ENCODE measurements at regions of chr1 and their contacts with region 1.

Region 1: DNA sequence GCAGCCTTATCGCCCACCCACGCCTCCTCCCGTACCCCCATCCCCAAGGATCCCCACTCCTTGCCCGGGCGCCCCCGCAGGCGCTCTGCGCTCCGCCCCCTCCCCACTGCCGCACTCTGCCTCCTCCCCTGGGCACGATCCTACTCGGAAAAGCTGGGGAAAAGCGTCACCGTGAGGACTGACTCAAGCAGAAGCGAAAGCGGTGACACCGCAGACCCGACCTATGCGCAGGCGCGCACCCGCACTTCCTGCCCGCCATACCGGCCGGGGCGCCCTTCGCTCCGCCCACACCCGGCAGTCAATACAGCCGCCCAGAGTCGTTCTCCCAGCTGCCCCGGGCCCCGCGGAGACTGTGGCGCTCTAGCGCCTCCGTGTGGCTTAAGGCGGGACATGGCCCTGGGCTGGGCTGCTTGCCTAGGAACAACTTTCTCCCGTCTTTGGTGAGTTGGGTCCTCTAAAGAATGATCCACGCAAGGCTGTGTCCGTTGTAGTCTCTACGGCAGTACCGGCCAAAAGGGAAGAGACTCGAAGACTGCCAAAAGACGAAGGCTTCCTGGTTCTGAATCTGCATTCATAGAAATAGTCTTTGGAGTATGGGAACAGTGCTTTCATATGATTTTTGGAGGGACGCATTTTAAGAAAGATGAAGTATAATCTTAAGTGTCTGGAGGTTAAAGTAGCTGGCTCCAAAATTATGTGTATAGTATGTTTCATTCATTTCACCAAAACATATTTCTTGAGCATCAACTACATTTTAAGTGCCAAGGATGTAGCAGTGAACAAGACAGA is at the start of gene OMA1:
- DNase-seq: peak; percentile 94 to 99
- H3K4me3 ChIP-seq: peak within 1 kb of the TSS; percentile 83 to 87
- H3K27ac ChIP-seq: peak within 1 kb of the TSS; percentile 99 to 100
- H3K4me1 ChIP-seq: peaks cover 0 to 5% of the 10 kb centered on the region in 2 donors
- H3K27me3 ChIP-seq: no peaks in the 10 kb centered on the region
- CTCF ChIP-seq: peak; percentile 96 to 99 (median 97)
- total RNA-seq, gene OMA1: 2.4 TPM

Region 2: DNA sequence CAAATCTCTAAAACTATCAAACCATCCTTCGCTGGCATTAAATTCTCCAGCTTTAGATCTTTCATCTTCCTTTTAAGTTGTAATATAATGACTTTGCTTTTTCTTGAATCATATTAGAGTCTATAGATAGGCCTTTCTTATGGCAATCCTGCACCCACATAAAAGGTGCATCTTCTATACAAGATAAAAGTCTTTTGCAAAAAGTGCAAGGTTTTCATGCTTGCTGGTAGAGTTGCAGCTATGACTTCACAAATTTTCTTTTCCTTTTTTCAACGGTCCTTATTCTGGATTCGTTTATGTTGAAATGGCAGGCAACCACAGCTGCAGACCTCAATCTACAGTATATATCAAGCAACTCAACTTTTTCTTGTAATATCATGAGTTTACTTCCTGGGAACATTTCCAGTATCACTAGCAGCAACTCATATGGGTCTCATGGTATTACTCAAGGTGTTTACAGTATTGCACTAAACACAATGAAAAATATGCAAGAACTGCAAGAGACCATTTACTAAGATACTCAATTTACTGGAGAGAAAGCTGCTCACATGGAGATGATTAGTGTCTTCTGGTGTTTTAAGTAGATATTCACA is 22.3 kb before region 1 on chr1:
- intact Hi-C with region 1: no loop called
- DNase-seq: no peak
- H3K4me3 ChIP-seq: no peak overlapping the region
- H3K27ac ChIP-seq: no peak overlapping the region
- H3K4me1 ChIP-seq: no peaks in the 10 kb centered on the region
- H3K27me3 ChIP-seq: no peaks in the 10 kb centered on the region
- CTCF ChIP-seq: no peak

Region 3: GRCh38 chr1:58576727-58577653 is 30.3 kb after region 1 on chr1 and contains the start of gene TACSTD2:
- intact Hi-C with region 1: loop called (anchors 2 kb)
- DNase-seq: peak in 1 of 2 donors; percentile 74
- H3K4me3 ChIP-seq: peak within 1 kb of the TSS; percentile 59 to 71
- H3K27ac ChIP-seq: peak within 1 kb of the TSS in 1 of 2 donors; percentile 58
- H3K4me1 ChIP-seq: peaks cover 8 to 9% of the 10 kb centered on the region in 2 donors
- H3K27me3 ChIP-seq: no peaks in the 10 kb centered on the region
- CTCF ChIP-seq: no peak
- total RNA-seq, gene TACSTD2: 1.3 TPM

Region 4: GRCh38 chr1:58592529-58593134 is 45.9 kb after region 1 on chr1:
- intact Hi-C with region 1: loop called (anchors 1 kb)
- DNase-seq: peak; percentile 49 to 95
- H3K4me3 ChIP-seq: no peak overlapping the region
- H3K27ac ChIP-seq: peak overlapping the region; percentile 79 to 88
- H3K4me1 ChIP-seq: peaks cover 6 to 35% of the 10 kb centered on the region in 2 donors
- H3K27me3 ChIP-seq: no peaks in the 10 kb centered on the region
- CTCF ChIP-seq: no peak

Region 5: GRCh38 chr1:58652651-58653184 is 106.0 kb after region 1 on chr1:
- intact Hi-C with region 1: loop called (anchors 1 kb)
- DNase-seq: peak in 1 of 2 donors; percentile 70
- H3K4me3 ChIP-seq: no peak overlapping the region
- H3K27ac ChIP-seq: no peak overlapping the region
- H3K4me1 ChIP-seq: no peaks in the 10 kb centered on the region
- H3K27me3 ChIP-seq: no peaks in the 10 kb centered on the region
- CTCF ChIP-seq: peak; percentile 66 to 81 (median 75)

Measured in ascending aorta (tissue), 2 donors.